GM10248 (cell line): ENCODE measurements at regions of chr20 and their contacts with region 1.

Region 1: DNA sequence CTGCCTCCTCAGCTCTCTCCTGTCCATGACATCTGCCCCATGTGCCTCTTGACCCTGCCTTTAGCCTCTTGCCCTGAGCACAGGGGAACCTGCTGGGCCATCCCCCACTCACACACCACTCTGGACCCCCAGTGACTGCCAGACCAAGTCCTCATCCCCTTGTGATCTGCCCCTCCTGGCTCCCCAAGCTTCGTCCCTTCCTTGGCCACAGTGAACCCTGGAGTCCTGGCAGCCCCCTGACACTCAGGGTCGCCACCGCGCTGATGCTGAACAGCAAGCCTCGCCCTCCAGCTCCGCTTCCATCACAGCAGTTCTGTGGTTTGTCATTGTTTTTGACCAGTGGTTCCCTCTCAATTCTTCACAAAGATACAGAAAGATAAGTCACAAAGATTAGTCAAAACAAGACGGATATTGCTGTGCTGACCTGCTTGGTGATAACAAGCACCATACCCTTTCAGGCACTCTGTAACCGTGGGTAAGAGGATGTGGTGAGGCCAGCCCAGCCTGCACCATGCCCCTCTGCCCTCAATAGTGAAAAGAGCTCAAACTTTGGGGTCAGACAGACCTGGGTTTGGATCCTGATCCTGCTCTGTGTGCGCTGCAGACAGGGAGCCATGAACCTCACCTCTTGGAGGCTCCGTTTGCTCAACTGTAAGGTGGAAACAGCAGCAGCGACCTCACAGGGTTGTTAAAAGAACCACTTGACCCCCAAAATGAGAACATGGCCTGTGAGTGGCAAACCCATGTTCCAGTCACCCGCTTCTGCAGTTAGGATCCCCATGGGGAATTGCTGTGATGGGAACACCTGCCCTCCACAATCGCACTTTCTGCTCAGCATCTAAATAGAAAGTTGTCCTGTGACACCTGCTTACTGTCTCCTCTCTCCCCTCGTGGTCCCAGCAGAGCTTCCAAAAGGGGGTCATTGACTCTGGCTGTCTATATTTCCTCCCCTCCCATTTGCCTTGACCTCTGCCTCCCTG is 114.5 kb downstream of the TOX2 start:
- DNase-seq: peak; percentile 29
- CTCF ChIP-seq: no peak

Region 2: GRCh38 chr20:44018259-44018941 is 10.8 kb before region 1 on chr20:
- CTCF ChIA-PET with region 1: interaction called, 16 read pairs
- POLR2A ChIA-PET with region 1: no interaction called
- DNase-seq: no peak
- CTCF ChIP-seq: no peak

Region 3: DNA sequence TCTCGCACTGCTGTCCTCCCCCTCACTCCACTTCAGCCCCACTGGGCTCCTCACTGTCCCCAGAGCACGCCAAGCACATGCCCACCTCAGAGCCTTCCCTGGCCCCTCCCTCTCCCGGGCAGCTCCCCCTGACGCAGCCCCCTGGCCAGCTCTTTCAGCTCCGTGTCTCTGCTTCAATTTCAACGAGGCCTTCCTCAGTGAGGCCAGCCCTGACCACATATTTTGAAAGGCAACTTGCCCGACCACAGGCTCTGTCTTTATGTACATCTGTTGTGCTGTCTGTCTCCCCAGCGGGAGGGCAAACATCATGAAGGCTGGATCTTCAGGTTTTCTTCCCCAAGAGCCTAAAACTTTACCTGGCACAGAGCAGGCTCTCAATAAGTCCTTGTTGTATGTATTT is 113.3 kb after region 1 on chr20:
- CTCF ChIA-PET with region 1: no interaction called
- POLR2A ChIA-PET with region 1: no interaction called
- DNase-seq: no peak
- CTCF ChIP-seq: no peak